SK-N-SH (cell line): ENCODE measurements at regions of chr1 and their contacts with region 1.

Region 1: GRCh38 chr1:223087291-223088255 is 55.5 kb downstream of the TLR5 start:
- DNase-seq: no peak
- H3K4me3 ChIP-seq: no peak overlapping the region
- H3K27ac ChIP-seq: no peak overlapping the region
- H3K4me1 ChIP-seq: peaks cover 0 to 9% of the 10 kb centered on the region in 2 experiments; a peak in 1 of 4 replicates
- H3K27me3 ChIP-seq: no peaks in the 10 kb centered on the region; the same call in 1 of the 2 replicates
- CTCF ChIP-seq: no peak
- EP300 ChIP-seq: no peak
- RAD21 ChIP-seq: no peak

Region 2: DNA sequence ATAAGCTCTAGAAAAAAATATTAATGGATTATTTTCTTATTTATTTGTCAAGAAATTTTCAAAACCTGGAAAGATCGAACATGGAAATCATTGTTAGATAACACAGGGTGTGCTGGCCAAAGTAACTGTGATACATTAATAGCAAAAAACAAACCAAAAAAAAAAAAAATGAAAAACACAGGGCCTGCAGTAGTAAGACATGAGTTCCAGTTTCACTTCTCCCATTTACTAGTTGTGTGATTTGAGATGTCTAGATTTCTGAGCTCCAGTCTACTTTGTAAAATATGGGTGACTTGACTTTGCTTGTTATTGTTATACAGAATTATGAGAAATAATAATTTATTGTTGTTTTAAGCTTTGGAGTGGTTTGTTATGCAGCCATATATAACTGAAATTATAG is 336.9 kb before region 1 on chr1:
- CTCF ChIA-PET with region 1: interaction called, 14 read pairs
- POLR2A ChIA-PET with region 1: no interaction called
- DNase-seq: no peak
- H3K4me3 ChIP-seq: no peak overlapping the region
- H3K27ac ChIP-seq: no peak overlapping the region
- H3K4me1 ChIP-seq: peaks cover 0 to 3% of the 10 kb centered on the region in 2 experiments; a peak in 1 of 4 replicates
- H3K27me3 ChIP-seq: no peaks in the 10 kb centered on the region
- CTCF ChIP-seq: no peak
- EP300 ChIP-seq: no peak
- RAD21 ChIP-seq: no peak

Region 3: DNA sequence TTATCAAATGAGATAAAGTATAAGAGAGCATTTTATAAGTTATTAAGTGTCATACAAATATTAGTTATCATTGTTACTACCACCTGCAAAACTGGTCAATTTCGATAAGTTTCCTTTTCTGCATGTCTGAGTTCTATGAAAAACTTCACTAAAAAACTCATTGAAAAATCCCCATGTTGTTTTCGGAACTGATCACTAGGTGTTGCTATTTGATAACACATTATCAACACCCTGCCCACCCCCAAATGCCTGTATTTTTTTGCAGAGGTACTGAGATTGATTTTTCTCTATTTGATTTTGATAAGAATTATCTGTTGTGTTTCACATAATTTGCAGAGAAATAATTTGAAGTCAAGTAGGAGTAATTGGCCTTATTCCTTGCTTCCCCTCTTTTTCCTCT is 294.8 kb before region 1 on chr1:
- CTCF ChIA-PET with region 1: interaction called, 69 read pairs
- POLR2A ChIA-PET with region 1: no interaction called
- DNase-seq: peak; percentile 68
- H3K4me3 ChIP-seq: no peak overlapping the region
- H3K27ac ChIP-seq: no peak overlapping the region
- H3K4me1 ChIP-seq: no peaks in the 10 kb centered on the region; a peak in 1 of 4 replicates
- H3K27me3 ChIP-seq: no peaks in the 10 kb centered on the region
- CTCF ChIP-seq: peak; percentile 78
- EP300 ChIP-seq: no peak
- RAD21 ChIP-seq: peak; percentile 93

Region 4: DNA sequence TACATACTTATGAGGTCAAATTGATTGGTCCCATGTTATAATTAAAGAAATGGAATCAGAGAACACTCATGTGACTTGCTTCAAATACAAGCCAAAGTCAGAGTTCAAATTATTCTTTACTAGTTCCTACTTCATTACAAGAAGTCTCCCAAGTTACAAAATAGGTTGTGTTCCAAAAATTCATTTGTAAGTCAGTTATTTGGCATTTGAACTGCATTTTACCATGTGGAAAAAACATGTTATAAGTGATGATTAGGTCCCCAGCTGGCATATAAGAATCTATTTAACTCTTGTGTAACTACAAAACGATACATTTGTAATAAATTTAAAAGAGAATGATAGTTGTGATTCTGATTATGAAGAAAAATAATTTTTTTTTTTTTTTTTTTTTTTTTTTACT is 148.6 kb before region 1 on chr1:
- CTCF ChIA-PET with region 1: no interaction called
- POLR2A ChIA-PET with region 1: no interaction called
- DNase-seq: no peak
- H3K4me3 ChIP-seq: no peak overlapping the region
- H3K27ac ChIP-seq: no peak overlapping the region
- H3K4me1 ChIP-seq: no peaks in the 10 kb centered on the region
- H3K27me3 ChIP-seq: no peaks in the 10 kb centered on the region
- CTCF ChIP-seq: no peak
- EP300 ChIP-seq: no peak
- RAD21 ChIP-seq: no peak

Region 5: GRCh38 chr1:222950892-222951291 is 136.7 kb before region 1 on chr1:
- CTCF ChIA-PET with region 1: no interaction called
- POLR2A ChIA-PET with region 1: no interaction called
- DNase-seq: no peak
- H3K4me3 ChIP-seq: no peak overlapping the region
- H3K27ac ChIP-seq: no peak overlapping the region
- H3K4me1 ChIP-seq: no peaks in the 10 kb centered on the region
- H3K27me3 ChIP-seq: no peaks in the 10 kb centered on the region
- CTCF ChIP-seq: no peak
- EP300 ChIP-seq: no peak
- RAD21 ChIP-seq: no peak

Region 6: GRCh38 chr1:223022641-223023473 is 64.7 kb before region 1 on chr1:
- CTCF ChIA-PET with region 1: no interaction called
- POLR2A ChIA-PET with region 1: no interaction called
- DNase-seq: peak; percentile 60
- H3K4me3 ChIP-seq: no peak overlapping the region
- H3K27ac ChIP-seq: peak overlapping the region in 1 of 2 experiments; percentile 60; a peak in 2 of 4 replicates
- H3K4me1 ChIP-seq: peaks cover 0 to 16% of the 10 kb centered on the region in 2 experiments; a peak in 1 of 4 replicates
- H3K27me3 ChIP-seq: no peaks in the 10 kb centered on the region
- CTCF ChIP-seq: no peak
- EP300 ChIP-seq: no peak; a peak in 1 of 4 replicates
- RAD21 ChIP-seq: no peak

Region 7: DNA sequence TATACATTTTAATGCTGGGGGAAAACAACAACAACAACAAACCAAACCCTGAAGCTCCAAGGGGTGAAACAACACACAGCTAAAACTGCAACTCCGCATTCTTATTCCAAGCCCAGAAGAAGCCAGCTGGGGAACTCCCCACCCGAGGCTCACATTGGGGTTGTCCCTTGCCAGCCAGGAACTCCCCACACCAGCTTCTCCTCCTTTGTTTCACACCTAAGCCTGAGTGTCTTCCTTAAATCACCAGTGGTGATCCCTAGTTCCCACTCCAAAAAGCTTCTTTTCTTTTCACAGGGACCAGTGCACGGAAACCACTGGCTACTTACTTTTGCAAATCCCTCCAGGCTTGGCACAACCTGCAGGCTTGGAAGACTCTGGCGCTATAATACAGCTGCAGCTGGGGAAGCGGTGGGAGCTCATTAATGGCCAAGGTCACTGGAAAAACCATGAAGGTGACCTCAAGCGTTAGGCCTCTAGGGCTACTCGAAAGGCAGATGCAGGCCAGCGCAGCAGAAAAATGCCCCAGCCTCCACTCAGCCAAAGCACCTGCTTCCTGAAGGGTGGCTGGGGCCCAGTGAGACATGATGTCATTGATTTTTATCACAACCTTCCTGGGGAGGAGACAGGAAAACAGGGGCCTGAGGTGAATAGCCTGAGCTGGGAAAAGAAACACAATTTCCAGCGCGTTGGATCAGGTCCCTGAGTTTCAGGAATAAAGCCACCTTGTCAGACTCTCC is 15.4 kb after region 1 on chr1:
- CTCF ChIA-PET with region 1: interaction called, 14 read pairs
- POLR2A ChIA-PET with region 1: no interaction called
- DNase-seq: peak; percentile 37
- H3K4me3 ChIP-seq: no peak overlapping the region
- H3K27ac ChIP-seq: peak overlapping the region in 1 of 2 experiments; percentile 82; a peak in 2 of 4 replicates
- H3K4me1 ChIP-seq: peaks cover 0 to 7% of the 10 kb centered on the region in 2 experiments; a peak in 1 of 4 replicates
- H3K27me3 ChIP-seq: 0 out of 2 replicates have a peak, but pooled peaks cover 1% of the 10 kb centered on the region
- CTCF ChIP-seq: no peak
- EP300 ChIP-seq: no peak
- RAD21 ChIP-seq: no peak

Region 8: GRCh38 chr1:223114871-223115270 is 27.3 kb after region 1 on chr1:
- CTCF ChIA-PET with region 1: interaction called, 10 read pairs
- POLR2A ChIA-PET with region 1: no interaction called
- DNase-seq: no peak
- H3K4me3 ChIP-seq: no peak overlapping the region
- H3K27ac ChIP-seq: no peak overlapping the region
- H3K4me1 ChIP-seq: no peaks in the 10 kb centered on the region
- H3K27me3 ChIP-seq: peaks cover 26% of the 10 kb centered on the region
- CTCF ChIP-seq: no peak
- EP300 ChIP-seq: no peak
- RAD21 ChIP-seq: no peak